ENCODE measurements at regions of chr19 and their contacts with region 1.

Region 1: GRCh38 chr19:38786572-38787265 is 2.3 kb upstream of the LGALS7B start:
- DNase-seq: no peak

Region 2: DNA sequence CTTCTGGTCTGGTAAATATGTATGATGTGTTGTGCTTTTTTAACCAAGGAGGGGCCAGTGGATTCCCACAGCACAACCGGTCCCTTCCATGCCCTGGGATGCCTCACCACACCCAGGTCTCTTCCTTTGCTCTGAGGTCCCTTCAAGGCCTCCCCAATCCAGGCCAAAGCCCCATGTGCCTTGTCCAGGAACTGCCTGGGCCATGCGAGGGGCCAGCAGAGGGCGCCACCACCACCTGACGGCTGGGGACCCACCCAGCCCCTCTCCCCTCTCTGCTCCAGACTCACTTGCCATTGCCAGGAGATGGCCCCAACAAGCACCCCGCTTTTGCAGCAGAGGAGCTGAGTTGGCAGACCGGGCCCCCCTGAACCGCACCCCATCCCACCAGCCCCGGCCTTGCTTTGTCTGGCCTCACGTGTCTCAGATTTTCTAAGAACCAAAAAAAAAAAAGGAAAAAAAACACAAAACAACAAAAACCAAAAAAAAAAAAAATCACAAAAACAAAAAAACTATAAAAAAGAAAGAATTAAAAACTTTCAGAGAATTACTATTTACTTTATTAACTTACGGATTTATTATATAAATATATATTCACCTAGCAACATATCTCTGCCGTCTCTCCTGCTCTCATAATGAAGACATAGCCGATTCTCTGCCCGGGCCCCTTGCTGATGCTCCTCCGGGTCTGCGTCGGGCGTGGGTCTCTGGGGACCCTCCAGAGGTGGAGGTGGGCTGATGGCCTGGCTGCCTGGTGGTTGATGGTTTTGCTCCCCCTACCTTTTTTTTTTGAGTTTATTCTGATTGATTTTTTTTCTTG is 56.9 kb before region 1 on chr19:
- intact Hi-C with region 1: loop called (anchors 2 kb)
- DNase-seq: no peak